Activated CD4-positive, alpha-beta memory T cell treated with anti-CD3 and anti-CD28 coated beads, Interleukin-2, amount 10 ng/mL, durations not matched to agents 7 days and 5 days (primary cell): ENCODE measurements at regions of chr3 and their contacts with region 1.

Region 1: DNA sequence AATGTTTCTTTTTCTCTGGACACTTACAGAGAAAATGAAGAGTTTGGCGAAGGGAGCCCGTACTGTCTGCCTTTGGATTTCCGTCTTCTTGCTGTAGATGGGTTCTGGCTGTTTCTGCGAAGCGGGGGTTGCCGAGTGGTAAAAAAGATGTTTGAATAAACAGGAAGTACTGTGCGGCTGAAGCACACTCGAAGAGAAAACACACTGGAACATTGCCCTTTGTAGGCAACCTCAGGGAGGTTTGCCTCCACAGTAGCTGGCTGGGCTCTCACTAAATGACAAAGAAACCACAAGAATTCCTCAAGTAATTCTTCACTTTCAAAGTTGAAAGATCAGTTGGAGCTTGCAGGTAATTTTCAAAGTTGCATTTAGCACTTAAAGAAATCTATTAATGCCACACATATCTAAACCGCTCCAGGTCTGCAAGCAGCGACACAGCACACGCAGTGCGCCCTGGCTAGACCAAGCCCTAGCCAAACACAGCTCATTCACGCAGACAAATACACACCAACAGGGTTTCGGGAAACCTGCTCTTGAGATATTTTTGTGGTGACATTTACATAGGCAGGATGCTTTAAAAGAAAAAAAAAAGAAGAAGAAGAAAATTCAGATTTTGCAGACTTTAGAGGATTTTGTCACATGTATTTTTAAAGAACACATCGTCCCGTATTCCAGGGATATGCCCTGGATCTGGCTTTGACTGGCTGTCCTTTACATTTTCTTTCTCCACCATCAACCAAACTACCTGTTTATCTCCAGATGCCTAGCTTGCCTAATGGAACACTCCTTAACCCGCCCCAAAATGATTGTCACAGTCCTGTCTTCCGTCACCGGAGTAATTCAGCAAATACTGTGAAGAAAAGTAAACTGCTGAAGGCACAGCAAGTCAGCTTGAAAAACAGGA is 452.8 kb downstream of the FOXP1 start:
- DNase-seq: peak; percentile 81
- H3K4me3 Mint-ChIP-seq: peak overlapping the region; percentile 89
- H3K27ac Mint-ChIP-seq: peak overlapping the region; percentile 93
- H3K4me1 Mint-ChIP-seq: peaks cover 53% of the 10 kb centered on the region
- H3K27me3 Mint-ChIP-seq: no peaks in the 10 kb centered on the region

Region 2: DNA sequence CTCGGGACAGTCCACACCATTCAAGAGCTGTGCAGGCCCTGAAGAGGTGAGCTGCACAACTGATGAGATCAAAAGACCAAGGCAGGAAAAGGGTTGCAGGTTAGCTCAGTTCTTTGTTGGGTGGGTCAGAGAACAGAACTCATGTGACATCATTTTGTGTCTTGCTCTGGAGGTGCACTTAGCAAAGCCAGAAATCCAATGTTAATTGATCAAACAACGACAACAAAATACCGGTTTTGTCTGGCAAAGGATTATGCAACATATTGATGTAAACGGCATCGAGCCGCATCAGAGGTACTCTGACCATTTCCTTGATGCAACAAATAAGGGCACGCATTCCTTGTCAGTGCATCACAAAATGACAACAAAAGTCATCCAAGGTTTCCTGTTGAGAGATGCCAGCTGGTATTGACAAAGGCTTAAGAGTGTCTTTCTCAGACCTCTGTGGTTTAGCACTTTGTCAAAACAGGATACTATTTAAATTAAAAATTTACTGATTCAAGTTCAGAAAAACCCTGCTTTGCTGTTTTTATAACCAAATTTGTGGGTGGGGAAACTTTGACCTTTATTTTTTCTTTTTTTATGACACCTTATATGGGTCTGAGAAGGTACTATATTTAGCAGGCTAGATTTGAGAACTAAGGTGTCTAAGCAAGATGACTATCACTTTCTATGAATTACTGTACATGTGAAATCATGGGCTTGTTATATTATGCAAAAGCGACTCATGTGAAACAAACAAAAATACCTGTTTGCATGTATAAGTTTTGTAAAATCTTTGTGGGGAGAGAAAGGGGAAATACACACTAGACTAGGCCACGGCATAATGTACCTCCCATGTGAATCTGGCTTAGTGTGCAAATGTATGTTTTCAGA is 43.3 kb before region 1 on chr3:
- CTCF ChIA-PET with region 1: no interaction called
- POLR2A ChIA-PET with region 1: interaction called, 13 read pairs
- DNase-seq: peak; percentile 62
- H3K4me3 Mint-ChIP-seq: peak overlapping the region; percentile 23
- H3K27ac Mint-ChIP-seq: peak overlapping the region; percentile 83
- H3K4me1 Mint-ChIP-seq: peaks cover 66% of the 10 kb centered on the region
- H3K27me3 Mint-ChIP-seq: peaks cover 2% of the 10 kb centered on the region

Region 3: GRCh38 chr3:71185733-71186455 is 55.2 kb after region 1 on chr3:
- CTCF ChIA-PET with region 1: no interaction called
- POLR2A ChIA-PET with region 1: no interaction called
- DNase-seq: no peak
- H3K4me3 Mint-ChIP-seq: no peak overlapping the region
- H3K27ac Mint-ChIP-seq: no peak overlapping the region
- H3K4me1 Mint-ChIP-seq: peaks cover 16% of the 10 kb centered on the region
- H3K27me3 Mint-ChIP-seq: no peaks in the 10 kb centered on the region

Region 4: DNA sequence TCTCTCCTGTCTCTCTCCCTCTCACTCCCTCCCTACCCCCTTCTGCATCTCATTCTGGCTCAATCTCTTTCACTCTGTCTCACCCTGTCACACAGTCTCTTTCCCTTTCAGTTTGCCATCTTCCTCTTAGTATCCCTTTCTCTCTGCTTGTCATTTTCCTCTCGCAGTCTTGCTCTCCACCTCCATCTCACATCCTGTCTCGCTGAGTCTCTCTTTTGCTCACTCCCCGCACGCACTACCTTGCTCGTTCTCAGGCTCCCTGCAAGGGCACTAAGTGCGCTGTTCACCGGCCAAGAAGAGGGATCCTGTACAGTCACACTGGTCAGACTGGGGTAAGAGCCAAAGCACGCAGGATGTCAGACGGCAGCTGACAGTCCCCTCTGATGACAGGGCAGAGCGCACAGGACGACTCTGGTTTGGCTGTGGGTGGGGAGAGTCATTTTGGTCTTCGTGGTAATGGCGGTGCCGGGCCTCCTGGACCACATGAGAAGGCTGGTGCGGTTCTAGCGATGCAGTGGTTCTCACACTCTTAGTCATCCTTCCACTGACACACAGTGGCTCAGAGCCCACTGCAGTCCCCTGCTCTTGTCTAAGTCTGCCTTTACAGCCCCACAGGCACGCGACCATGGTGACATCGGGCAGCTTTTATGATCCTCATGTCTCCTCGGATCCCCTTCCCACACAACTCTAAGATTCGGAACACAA is 96.0 kb after region 1 on chr3:
- CTCF ChIA-PET with region 1: interaction called, 4 read pairs
- POLR2A ChIA-PET with region 1: interaction called, 26 read pairs
- DNase-seq: peak; percentile 89
- H3K4me3 Mint-ChIP-seq: peak overlapping the region; percentile 78
- H3K27ac Mint-ChIP-seq: peak overlapping the region; percentile 90
- H3K4me1 Mint-ChIP-seq: peaks cover 33% of the 10 kb centered on the region
- H3K27me3 Mint-ChIP-seq: peaks cover 31% of the 10 kb centered on the region

Region 5: DNA sequence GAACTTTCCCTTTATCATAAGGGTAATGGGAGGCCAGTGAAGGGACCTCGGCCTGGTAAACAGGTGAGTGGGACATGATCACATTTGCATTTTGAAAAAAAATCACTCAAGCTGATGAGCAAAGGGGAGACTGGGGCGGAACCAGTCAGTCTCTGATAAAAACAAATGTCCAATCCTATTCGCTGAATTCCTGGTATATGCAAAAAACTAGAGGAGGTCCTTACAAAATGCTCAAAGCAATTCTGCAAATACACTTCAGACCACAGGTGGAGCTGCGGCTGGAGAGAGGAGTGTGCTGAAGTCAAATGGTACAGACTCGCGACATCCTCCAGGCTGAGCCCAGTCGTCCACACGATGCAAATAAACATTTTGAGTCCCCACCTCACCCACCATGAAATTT is 286.2 kb after region 1 on chr3:
- CTCF ChIA-PET with region 1: no interaction called
- POLR2A ChIA-PET with region 1: no interaction called
- DNase-seq: peak; percentile 22
- H3K4me3 Mint-ChIP-seq: no peak overlapping the region
- H3K27ac Mint-ChIP-seq: no peak overlapping the region
- H3K4me1 Mint-ChIP-seq: peaks cover 45% of the 10 kb centered on the region
- H3K27me3 Mint-ChIP-seq: peaks cover 8% of the 10 kb centered on the region

Region 6: GRCh38 chr3:71583566-71584449 is 453.1 kb after region 1 on chr3 and contains the start of gene FOXP1:
- CTCF ChIA-PET with region 1: interaction called, 3 read pairs
- POLR2A ChIA-PET with region 1: interaction called, 10 read pairs
- DNase-seq: peak; percentile 66
- H3K4me3 Mint-ChIP-seq: peak within 1 kb of the TSS; percentile 82
- H3K27ac Mint-ChIP-seq: peak within 1 kb of the TSS; percentile 74
- H3K4me1 Mint-ChIP-seq: peaks cover 39% of the 10 kb centered on the region
- H3K27me3 Mint-ChIP-seq: peaks cover 15% of the 10 kb centered on the region
- total RNA-seq, gene FOXP1: 71.3 to 76.9 TPM